PC-9 (cell line): ENCODE measurements at regions of chr1 and their contacts with region 1.

Region 1: DNA sequence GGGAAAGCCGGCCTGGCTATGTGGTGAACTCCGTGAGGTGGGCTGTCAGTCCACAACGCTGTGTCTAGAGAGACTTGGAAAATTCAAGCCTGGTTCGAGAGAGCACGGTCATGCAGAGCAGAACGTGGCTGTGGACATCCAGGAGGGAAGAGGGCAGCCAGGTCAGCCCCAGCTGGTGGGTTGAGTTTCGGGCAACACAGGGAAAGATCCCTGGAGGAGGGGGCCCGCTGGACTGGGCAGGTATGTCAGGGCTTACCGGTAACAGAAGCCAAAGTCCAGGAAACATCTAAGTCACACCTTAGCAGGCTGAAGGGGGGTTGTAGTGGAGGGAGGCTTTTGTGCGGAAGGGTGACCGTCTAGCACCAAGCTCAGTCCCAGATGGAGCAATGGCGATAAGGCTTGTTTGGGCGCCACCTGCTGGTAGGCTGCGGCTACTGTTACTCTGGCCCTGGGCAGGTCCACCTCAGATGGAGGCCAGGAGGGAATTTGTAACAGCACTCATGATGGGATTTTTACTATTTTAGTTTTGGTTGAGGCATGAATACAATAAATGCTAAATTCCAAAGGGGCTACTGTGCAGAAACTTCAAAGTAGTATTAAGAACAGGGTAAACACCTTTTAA is 143.3 kb upstream of the ZNF644 start:
- DNase-seq: peak; percentile 58 to 72
- H3K4me3 ChIP-seq: no peak overlapping the region
- H3K27ac ChIP-seq: no peak overlapping the region
- H3K4me1 ChIP-seq: peaks cover 14% of the 10 kb centered on the region
- H3K27me3 ChIP-seq: no peaks in the 10 kb centered on the region
- CTCF ChIP-seq: peak; percentile 99

Region 2: DNA sequence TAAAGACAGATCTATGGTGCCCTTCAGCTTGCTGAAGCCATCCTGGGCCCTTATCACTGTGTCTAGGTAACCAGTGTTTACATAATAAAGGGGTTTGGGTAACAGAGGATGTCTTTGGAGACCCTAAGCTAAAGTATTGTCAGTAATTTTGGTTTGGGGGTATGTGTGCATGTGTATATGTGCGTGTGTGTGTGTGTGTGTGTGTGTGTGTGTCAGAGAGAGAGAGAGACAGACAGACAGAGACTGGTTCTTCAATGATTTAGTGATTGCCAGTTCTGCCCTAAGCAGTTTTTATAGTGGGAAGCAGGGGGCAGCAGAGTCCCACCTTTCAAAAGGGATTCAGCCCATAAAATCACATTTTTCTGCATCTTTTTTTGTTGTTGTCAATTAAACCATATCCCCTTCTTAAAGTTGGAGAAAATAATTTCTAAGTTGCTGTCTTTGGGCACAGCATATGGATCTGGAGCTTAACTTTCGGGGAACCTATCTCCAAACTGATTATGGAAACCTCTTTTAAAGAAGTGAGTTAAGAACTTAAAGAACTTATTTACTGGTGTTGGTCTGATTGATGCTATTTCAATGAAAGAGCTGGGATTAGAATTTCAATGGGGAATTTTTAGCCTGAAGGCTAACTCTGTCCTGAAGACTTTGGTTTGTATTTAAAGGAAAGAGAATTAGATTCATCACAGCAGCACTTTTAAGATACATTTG is 1119.1 kb before region 1 on chr1:
- CTCF ChIA-PET with region 1: no interaction called
- POLR2A ChIA-PET with region 1: no interaction called
- intact Hi-C with region 1: loop called (anchors 10 kb)
- DNase-seq: peak in 1 of 2 experiments; percentile 7
- H3K4me3 ChIP-seq: no peak overlapping the region
- H3K27ac ChIP-seq: no peak overlapping the region
- H3K4me1 ChIP-seq: no peaks in the 10 kb centered on the region
- H3K27me3 ChIP-seq: no peaks in the 10 kb centered on the region
- CTCF ChIP-seq: peak; percentile 88

Region 3: GRCh38 chr1:90973897-90974798 is 191.0 kb before region 1 on chr1:
- CTCF ChIA-PET with region 1: no interaction called
- POLR2A ChIA-PET with region 1: no interaction called
- intact Hi-C with region 1: loop called (anchors 10 kb)
- DNase-seq: no peak
- H3K4me3 ChIP-seq: no peak overlapping the region
- H3K27ac ChIP-seq: peak overlapping the region; percentile 11
- H3K4me1 ChIP-seq: peaks cover 9% of the 10 kb centered on the region
- H3K27me3 ChIP-seq: no peaks in the 10 kb centered on the region
- CTCF ChIP-seq: no peak

Region 4: DNA sequence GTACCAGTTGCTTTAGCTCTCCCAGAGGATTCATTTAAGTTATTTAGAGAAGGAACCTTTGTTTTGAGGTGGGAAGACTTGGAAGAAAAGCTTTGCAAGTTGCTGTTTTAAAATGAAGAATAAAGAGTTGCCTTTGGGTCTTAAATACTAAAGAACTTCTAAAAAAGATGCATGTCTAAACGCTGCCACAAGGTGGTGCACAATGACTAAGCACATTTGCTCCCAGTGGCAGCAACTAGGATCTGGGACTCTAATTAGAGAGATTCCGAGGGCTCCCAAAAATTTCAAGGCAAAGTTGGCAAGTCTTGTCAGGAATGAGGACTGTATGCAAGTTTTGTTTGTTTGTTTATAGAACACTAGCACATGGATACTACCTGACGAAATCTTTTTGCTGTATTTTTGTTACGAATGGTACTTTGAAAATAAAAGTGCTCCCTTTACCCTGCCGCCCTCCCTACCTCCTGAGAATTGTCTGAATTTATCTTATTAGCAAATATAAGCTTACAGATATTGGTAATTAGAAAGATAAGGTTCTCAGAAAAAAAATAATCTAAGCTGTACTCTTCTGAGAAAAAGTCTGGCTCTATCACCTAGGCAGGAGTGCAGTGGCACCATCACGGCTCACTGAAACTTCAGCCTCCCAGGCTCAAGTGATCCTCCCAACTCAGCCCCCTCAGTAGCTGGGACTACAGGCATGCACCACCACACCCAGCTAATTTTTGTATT is 117.7 kb after region 1 on chr1:
- CTCF ChIA-PET with region 1: interaction called, 23 read pairs
- POLR2A ChIA-PET with region 1: no interaction called
- intact Hi-C with region 1: loop called (anchors 1 kb)
- DNase-seq: peak; percentile 37 to 66
- H3K4me3 ChIP-seq: no peak overlapping the region
- H3K27ac ChIP-seq: no peak overlapping the region
- H3K4me1 ChIP-seq: no peaks in the 10 kb centered on the region
- H3K27me3 ChIP-seq: no peaks in the 10 kb centered on the region
- CTCF ChIP-seq: peak; percentile 97

Region 5: DNA sequence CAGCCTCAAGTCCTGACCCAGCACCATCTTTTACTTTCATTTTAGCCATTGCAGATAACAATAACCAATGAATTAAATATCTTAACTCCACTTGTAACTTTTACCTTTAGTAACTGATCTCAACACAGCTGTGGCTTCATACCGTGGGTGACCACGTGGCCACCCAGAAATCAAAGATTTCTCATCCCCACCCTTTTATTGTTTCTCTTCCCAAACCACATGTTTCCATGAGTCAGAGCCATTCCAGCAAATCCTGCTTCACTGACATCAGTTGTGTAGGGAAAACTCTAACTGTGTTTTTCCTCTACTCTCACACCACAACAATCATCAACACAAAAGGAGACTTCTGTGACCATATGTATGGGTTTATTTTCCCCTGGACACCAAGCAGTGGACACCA is 759.0 kb after region 1 on chr1:
- CTCF ChIA-PET with region 1: no interaction called
- POLR2A ChIA-PET with region 1: no interaction called
- intact Hi-C with region 1: loop called (anchors 10 kb)
- DNase-seq: no peak
- H3K4me3 ChIP-seq: no peak overlapping the region
- H3K27ac ChIP-seq: no peak overlapping the region
- H3K4me1 ChIP-seq: peaks cover 13% of the 10 kb centered on the region
- H3K27me3 ChIP-seq: no peaks in the 10 kb centered on the region
- CTCF ChIP-seq: no peak

Region 6: DNA sequence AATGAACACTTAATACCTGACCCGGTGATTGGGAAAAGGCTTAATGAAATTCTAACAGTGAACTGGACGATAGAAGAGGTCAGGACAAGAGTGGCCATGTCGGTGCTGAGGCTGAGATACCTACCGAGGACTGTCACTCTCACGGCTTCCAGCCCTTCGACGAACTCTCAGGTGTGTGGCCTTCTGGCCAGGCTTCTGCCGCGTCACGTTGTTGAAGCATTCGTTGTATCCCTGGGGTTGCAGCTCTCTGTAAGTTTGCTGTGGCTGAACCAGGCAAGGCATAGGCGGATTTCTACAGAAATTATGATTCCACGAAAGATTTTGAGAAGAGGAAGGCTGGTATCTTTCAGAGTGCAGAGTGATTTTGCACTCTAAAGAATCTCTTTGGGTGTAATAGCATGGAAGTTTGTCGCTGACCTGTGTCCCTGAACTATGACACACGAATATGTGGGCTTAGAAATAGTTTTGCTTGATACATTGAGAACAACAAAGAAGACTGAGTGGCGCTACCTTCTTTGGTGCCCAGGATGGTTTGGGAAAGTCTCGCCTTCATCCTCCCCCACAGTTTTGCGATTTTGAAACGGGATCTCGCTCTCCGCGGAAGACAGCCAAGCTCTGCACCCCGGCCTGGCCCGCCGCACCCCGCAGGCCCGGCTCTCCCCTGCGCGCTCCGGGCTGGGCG is 864.2 kb after region 1 on chr1:
- CTCF ChIA-PET with region 1: no interaction called
- POLR2A ChIA-PET with region 1: no interaction called
- intact Hi-C with region 1: no loop called
- DNase-seq: no peak
- H3K4me3 ChIP-seq: peak overlapping the region; percentile 95
- H3K27ac ChIP-seq: no peak overlapping the region
- H3K4me1 ChIP-seq: peaks cover 22% of the 10 kb centered on the region
- H3K27me3 ChIP-seq: no peaks in the 10 kb centered on the region
- CTCF ChIP-seq: no peak